OCI-LY7 (cell line): ENCODE measurements at regions of chr18 and their contacts with region 1.

Region 1: DNA sequence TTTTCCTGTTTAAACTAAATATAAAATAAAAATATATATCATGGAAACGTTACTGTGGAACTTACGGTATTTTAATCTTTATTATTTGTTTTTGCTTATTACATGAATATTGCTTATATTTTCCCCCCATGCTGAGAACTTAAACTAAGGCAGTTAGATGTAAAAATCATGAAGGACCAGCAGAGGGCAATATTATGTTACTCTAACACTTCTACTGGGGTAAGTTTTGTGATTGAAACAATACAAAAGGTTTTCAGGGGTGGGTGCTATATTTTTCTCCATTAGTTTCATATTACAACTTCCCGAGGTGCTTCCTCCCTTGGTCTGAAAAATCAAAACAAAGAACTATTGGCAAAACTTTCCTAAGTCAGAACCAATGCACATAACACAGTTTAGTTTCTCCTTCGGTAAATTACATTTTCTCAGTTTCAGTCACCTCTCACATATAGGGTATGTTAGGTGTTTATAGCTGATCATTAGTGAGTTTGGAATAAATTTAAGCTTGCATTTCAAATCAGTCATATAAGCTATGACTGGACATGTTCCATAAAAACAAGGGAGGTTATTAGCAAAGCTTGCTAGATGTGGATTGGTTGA is 54.8 kb downstream of the ZNF407 start:
- DNase-seq: peak; percentile 43
- H3K4me3 ChIP-seq: no peak overlapping the region
- H3K27ac ChIP-seq: no peak overlapping the region
- H3K4me1 ChIP-seq: no peaks in the 10 kb centered on the region
- CTCF ChIP-seq: peak; percentile 74

Region 2: DNA sequence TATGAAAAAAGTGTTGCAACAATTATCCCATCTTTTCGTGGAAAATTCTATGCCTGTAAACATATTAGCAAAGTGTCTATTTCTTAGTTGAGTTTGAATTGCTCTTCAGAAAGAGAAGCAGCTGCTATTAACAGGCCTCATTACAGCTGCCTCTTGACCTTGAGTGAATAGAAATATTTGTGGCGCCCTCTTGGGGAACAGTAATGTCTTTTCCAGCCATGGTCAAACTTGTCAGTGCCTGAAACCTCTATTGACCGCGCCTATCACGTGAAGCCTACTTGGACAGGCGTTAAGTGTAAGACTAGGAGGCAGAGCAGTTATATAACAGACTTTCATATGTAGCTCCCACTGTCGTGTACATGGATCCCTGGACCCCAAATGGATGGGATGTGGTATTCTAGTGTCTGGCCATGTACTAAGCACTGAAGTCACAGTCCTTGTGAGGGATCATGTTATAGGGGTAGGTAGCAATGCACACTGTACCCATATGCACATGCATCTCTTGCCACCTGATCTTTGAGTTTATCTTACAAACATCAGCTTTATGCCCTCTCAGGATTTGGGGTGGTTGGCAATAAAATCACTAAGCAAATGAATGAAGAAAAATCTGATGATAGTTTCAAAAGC is 311.4 kb after region 1 on chr18:
- CTCF ChIA-PET with region 1: no interaction called
- POLR2A ChIA-PET with region 1: no interaction called
- intact Hi-C with region 1: loop called (anchors 10 kb)
- DNase-seq: peak; percentile 26
- H3K4me3 ChIP-seq: no peak overlapping the region
- H3K27ac ChIP-seq: no peak overlapping the region
- H3K4me1 ChIP-seq: no peaks in the 10 kb centered on the region
- CTCF ChIP-seq: peak; percentile 65

Region 3: GRCh38 chr18:75478996-75479880 is 826.7 kb after region 1 on chr18:
- CTCF ChIA-PET with region 1: no interaction called
- POLR2A ChIA-PET with region 1: no interaction called
- intact Hi-C with region 1: loop called (anchors 5 kb)
- DNase-seq: peak; percentile 24
- H3K4me3 ChIP-seq: no peak overlapping the region
- H3K27ac ChIP-seq: no peak overlapping the region
- H3K4me1 ChIP-seq: no peaks in the 10 kb centered on the region
- CTCF ChIP-seq: peak; percentile 72